ENCODE measurements at regions of chr15 and their contacts with region 1.

Region 1: GRCh38 chr15:62603757-62604156 is 438.7 kb upstream of the C2CD4B start:
- DNase-seq: no peak
- H3K4me3 ChIP-seq: no peak overlapping the region
- H3K27ac ChIP-seq: no peak overlapping the region
- H3K4me1 ChIP-seq: peaks cover 11% of the 10 kb centered on the region
- H3K27me3 ChIP-seq: no peaks in the 10 kb centered on the region
- CTCF ChIP-seq: no peak

Region 2: GRCh38 chr15:60880949-60881348 is 1722.8 kb before region 1 on chr15:
- CTCF ChIA-PET with region 1: interaction called, 14 read pairs
- POLR2A ChIA-PET with region 1: no interaction called
- intact Hi-C with region 1: no loop called
- DNase-seq: no peak
- H3K4me3 ChIP-seq: no peak overlapping the region
- H3K27ac ChIP-seq: no peak overlapping the region
- H3K4me1 ChIP-seq: no peaks in the 10 kb centered on the region
- H3K27me3 ChIP-seq: no peaks in the 10 kb centered on the region
- CTCF ChIP-seq: no peak

Region 3: DNA sequence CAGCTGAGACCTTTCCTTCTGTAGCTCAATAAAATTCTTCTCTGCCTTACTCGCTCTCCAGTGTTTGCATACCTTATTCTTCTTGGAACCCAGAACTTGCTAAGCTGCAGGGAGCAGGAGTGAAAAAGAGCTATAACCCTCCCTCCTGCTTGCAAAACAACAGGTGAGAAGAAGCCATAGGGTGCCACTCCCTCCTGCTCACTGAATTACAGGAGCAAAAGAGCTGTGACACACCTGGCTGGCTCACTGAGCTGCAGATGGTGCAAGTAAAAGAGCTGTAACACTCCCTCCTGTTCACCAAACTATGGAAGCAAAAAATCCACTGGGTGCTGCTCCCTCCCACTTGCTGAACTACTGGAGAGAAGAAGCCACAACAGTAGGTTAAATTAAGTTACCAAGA is 394.4 kb before region 1 on chr15:
- CTCF ChIA-PET with region 1: no interaction called
- POLR2A ChIA-PET with region 1: no interaction called
- intact Hi-C with region 1: no loop called
- DNase-seq: no peak
- H3K4me3 ChIP-seq: no peak overlapping the region
- H3K27ac ChIP-seq: no peak overlapping the region
- H3K4me1 ChIP-seq: no peaks in the 10 kb centered on the region
- H3K27me3 ChIP-seq: no peaks in the 10 kb centered on the region
- CTCF ChIP-seq: no peak

Region 4: DNA sequence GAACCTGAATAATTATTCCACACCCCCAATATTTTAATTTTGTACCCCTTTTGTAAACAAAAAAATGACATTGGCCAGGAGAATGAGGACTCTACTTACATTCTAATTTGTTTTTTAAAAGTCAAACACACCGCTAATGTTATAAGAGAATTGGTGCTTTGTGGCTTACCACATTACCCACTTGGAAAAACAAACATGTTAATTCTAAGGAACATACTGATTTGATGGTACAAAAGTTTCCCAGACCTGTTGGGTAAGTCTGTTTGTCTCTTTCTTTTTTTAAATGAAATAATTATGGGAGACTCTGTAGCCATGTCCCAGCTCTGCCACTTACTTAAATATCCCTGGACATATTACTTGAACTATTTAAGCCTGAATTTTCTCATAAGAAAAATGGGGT is 86.2 kb before region 1 on chr15:
- CTCF ChIA-PET with region 1: no interaction called
- POLR2A ChIA-PET with region 1: no interaction called
- intact Hi-C with region 1: no loop called
- DNase-seq: no peak
- H3K4me3 ChIP-seq: no peak overlapping the region
- H3K27ac ChIP-seq: no peak overlapping the region
- H3K4me1 ChIP-seq: no peaks in the 10 kb centered on the region
- H3K27me3 ChIP-seq: no peaks in the 10 kb centered on the region
- CTCF ChIP-seq: no peak

Region 5: GRCh38 chr15:62584301-62585235 is 19.2 kb before region 1 on chr15:
- CTCF ChIA-PET with region 1: no interaction called
- POLR2A ChIA-PET with region 1: no interaction called
- intact Hi-C with region 1: no loop called
- DNase-seq: no peak
- H3K4me3 ChIP-seq: no peak overlapping the region
- H3K27ac ChIP-seq: no peak overlapping the region
- H3K4me1 ChIP-seq: peaks cover 9% of the 10 kb centered on the region
- H3K27me3 ChIP-seq: no peaks in the 10 kb centered on the region
- CTCF ChIP-seq: no peak

Region 6: DNA sequence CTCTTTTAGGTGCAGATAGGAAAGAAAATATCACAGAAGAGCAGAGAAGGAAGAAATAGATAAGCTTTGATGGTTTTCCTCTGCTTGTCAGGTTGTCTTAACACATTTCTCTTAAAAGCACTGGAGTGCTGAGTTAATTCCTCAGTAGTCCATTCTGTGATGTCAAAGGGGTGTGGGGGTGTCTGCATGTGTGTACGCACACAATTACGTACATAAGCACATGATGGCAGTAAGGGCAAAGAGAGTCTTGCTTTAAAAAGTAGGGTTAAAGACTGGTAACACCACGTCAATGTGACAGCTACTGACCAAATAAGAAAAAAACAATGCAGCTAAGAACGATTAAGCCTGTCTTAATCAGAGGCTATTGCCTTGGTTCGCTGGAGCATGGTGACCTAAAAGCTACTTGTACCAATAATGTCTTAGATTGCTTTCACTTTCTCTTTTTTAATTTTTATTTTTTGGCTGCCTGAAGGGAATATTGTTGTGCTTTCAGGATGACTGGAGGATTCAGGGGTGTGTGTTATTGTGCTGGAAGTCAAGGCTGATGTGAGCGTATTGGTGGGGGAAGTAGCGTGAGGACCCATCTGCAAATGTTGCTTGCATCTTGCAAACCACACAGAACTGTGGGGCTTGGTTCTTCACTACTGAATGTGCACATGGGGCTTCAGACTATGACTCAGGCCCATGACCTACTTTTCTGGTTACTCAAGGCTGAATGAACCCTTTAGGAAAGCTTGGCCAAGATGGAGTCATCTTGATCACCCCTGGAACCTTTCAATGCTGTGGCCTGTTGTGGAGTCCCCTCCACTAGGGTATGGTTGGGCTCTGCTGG is 21.0 kb after region 1 on chr15:
- CTCF ChIA-PET with region 1: no interaction called
- POLR2A ChIA-PET with region 1: no interaction called
- intact Hi-C with region 1: no loop called
- DNase-seq: no peak
- H3K4me3 ChIP-seq: no peak overlapping the region
- H3K27ac ChIP-seq: no peak overlapping the region
- H3K4me1 ChIP-seq: no peaks in the 10 kb centered on the region
- H3K27me3 ChIP-seq: no peaks in the 10 kb centered on the region
- CTCF ChIP-seq: no peak

Measured in A673 (cell line).